ENCODE measurements at regions of chr3 and their contacts with region 1.

Region 1: DNA sequence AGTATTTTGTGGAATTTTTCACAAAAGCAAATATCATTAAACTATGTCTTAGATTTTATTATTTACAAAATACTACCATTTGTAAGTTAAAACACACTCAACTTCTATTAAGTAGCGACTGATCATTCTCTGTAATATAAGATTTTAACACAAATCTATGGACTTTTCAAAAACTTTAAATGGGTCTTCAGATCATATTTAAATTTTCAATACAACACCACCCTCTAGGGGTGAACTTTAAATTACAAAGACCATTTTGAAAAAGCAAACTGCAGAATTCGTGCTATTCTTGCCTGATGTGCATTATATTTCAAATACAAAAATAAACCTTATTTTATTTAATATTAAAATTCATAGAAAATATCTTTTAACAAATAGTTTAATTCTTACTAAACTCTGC is 8.2 kb upstream of the VGLL4 start:
- DNase-seq: no peak

Region 2: DNA sequence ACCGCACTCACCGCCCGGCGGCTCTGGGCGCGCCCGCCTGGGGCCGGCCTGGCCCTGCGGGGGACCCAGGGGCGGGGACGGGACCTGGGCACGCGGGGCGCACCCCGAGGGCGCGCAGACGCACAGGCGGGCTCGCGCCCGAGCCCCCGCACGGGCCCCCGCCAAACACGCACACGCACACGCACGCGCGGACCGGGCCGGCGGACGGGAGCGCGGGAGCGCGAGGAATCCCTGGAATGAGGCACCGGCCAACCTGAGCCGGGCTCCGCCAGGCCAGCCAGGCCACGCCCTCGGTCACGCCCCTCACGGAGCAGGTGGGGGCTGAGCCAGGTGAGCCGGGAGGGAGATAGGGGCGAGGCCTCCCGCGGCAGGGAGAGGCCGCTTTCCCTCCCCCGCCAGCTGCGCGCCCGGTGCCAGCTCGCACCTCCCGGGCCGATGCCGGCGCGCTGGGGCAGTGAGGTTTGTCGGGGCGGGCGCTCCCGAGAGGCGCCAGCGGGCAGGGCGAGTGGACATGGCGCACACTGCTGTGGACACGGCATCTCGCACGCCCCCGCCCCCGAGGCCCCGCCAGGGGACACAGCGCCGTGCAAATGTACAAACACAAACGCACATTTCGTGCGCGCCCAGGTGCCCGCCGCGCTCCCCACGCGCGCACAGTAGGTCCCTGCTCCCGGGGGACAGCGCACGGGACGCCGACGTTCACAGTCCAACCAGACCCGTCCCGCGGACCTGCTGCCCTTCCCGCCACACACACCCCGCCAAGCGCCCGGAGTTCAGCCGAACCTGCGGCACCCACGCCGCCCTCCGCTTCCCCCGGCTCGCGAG is 67.7 kb after region 1 on chr3:
- intact Hi-C with region 1: no loop called
- DNase-seq: peak; percentile 49 to 95 (median 85)

Region 3: GRCh38 chr3:11803977-11804892 is 152.3 kb after region 1 on chr3:
- intact Hi-C with region 1: loop called (anchors 10 kb)
- DNase-seq: peak in 33 of 42 donors; percentile 16 to 72 (median 42)

Measured in head of caudate nucleus (tissue), 42 donors.